Activated CD8-positive, alpha-beta T cell treated with anti-CD3 and anti-CD28 coated beads, Interleukin-2, amount 10 ng/mL, durations not matched to agents 7 days and 5 days (primary cell): ENCODE measurements at regions of chr22 and their contacts with region 1.

Region 1: GRCh38 chr22:20531315-20532201 is 24.1 kb downstream of the MED15 start:
- DNase-seq: no peak
- ATAC-seq: peak; percentile 34
- H3K4me3 Mint-ChIP-seq: no peak overlapping the region
- H3K27ac Mint-ChIP-seq: peak overlapping the region; percentile 73
- H3K4me1 Mint-ChIP-seq: peaks cover 64% of the 10 kb centered on the region
- H3K27me3 Mint-ChIP-seq: no peaks in the 10 kb centered on the region

Region 2: DNA sequence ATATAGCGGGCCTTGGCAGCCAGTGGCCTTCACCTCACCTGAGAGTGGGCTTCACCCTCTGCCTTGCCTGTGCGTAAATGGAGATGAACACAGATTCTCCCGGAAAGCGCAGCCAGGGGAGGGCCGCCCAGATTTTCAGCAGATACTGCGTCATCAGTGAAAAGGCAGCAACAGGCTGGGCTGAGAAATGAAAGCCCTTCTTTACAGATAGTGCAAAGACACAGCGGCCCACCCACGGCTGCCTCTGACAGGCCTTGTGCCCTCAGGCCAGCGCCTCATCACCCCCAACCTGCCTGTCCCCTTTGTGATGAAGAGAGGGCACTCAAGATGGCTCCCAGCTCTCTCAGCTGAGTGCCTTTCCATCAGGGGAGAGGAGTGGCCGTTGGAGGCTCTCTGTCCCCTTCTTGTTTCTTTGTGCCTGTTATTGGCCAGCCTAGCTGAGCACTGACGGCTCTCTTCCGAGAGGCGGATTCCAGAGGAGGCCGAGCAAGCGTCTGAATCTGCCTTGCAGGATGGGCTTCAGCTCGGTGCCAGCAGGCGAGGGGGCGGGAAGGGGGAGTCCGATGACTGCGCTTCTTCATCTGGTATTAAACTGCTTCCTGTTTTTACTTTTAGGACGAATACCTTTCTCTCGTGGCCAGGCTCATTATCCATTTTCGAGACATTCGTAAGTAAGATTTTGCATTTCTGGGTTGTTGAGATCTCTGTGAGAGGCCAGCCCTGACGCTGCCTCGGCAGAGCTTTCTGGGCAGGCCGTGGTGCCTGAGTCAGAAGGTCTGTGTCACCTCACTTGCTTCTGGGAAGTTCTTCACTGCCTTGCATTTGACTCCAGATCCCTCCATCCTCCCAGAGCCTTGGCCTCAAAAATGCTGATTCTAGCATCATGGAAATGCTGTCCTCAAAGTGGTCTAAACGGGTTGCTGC is 19.5 kb after region 1 on chr22:
- CTCF ChIA-PET with region 1: interaction called, 12 read pairs
- POLR2A ChIA-PET with region 1: interaction called, 3 read pairs
- DNase-seq: peak; percentile 61
- ATAC-seq: peak; percentile 25
- H3K4me3 Mint-ChIP-seq: peak overlapping the region; percentile 76
- H3K27ac Mint-ChIP-seq: peak overlapping the region; percentile 96
- H3K4me1 Mint-ChIP-seq: peaks cover 92% of the 10 kb centered on the region
- H3K27me3 Mint-ChIP-seq: no peaks in the 10 kb centered on the region

Region 3: GRCh38 chr22:20563248-20563906 is 31.8 kb after region 1 on chr22:
- CTCF ChIA-PET with region 1: interaction called, 11 read pairs
- POLR2A ChIA-PET with region 1: no interaction called
- DNase-seq: no peak
- ATAC-seq: no peak
- H3K4me3 Mint-ChIP-seq: no peak overlapping the region
- H3K27ac Mint-ChIP-seq: peak overlapping the region; percentile 70
- H3K4me1 Mint-ChIP-seq: peaks cover 79% of the 10 kb centered on the region
- H3K27me3 Mint-ChIP-seq: no peaks in the 10 kb centered on the region

Region 4: DNA sequence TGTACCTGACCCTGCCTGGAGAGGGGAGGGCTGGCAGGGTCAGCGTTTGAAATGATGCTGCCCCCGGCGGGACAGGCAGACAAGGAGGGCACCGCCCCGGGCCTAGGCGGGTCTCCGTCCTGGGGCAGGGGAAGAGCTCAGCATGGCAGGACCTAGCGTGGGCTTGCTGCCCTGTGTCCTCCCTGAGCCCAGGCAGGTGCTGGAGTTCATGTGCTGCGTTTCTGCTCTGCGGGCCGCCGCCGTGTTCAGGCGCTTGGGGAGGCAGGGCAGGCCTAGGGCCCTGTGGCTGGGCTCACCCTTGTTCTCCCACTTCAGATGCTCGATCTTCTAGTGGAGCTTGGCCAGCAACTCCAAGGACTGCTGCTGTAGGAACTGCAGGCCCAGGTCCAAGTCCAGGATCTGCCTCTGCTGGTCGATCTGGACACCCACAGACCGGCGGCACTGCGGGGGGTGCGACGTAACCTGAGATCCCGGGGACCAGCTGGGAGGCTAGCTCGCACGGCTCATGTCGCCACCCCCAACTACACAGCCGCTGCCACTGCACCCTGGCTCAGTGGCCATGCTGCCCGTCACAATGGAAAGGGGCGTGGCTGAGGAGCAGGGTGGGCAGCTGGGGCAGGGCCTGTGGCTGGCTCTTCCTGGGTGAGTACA is 60.2 kb after region 1 on chr22:
- CTCF ChIA-PET with region 1: no interaction called
- POLR2A ChIA-PET with region 1: no interaction called
- DNase-seq: no peak
- ATAC-seq: no peak
- H3K4me3 Mint-ChIP-seq: no peak overlapping the region
- H3K27ac Mint-ChIP-seq: no peak overlapping the region
- H3K4me1 Mint-ChIP-seq: peaks cover 3% of the 10 kb centered on the region
- H3K27me3 Mint-ChIP-seq: no peaks in the 10 kb centered on the region